ENCODE measurements at regions of chr10 and their contacts with region 1.

Region 1: DNA sequence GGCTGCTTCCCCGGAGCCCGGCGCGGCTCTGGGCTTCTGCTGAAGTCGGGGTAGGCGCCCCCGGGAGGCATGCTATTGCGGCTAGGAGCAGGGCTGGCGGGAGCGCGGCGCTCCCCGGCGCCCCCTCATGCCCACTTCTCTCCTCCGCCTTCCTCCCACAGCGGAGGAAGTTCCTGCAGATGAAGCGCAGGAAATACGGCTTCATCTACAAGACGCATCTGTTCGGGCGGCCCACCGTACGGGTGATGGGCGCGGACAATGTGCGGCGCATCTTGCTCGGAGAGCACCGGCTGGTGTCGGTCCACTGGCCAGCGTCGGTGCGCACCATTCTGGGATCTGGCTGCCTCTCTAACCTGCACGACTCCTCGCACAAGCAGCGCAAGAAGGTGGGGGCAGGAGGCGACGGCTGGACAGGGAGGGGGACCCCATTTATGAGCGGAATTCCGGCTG is 479 bp downstream of the CYP26A1 start:
- DNase-seq: no peak
- H3K4me3 Mint-ChIP-seq: peak overlapping the region; percentile 39
- H3K27ac Mint-ChIP-seq: no peak overlapping the region
- H3K4me1 Mint-ChIP-seq: peaks cover 16% of the 10 kb centered on the region
- H3K27me3 Mint-ChIP-seq: peaks cover 79% of the 10 kb centered on the region

Region 2: GRCh38 chr10:92657024-92657423 is 417.1 kb before region 1 on chr10:
- intact Hi-C with region 1: no loop called
- DNase-seq: no peak
- H3K4me3 Mint-ChIP-seq: no peak overlapping the region
- H3K27ac Mint-ChIP-seq: no peak overlapping the region
- H3K4me1 Mint-ChIP-seq: no peaks in the 10 kb centered on the region
- H3K27me3 Mint-ChIP-seq: no peaks in the 10 kb centered on the region

Region 3: GRCh38 chr10:92880233-92880861 is 193.8 kb before region 1 on chr10:
- intact Hi-C with region 1: loop called (anchors 10 kb)
- DNase-seq: no peak
- H3K4me3 Mint-ChIP-seq: no peak overlapping the region
- H3K27ac Mint-ChIP-seq: no peak overlapping the region
- H3K4me1 Mint-ChIP-seq: peaks cover 18% of the 10 kb centered on the region
- H3K27me3 Mint-ChIP-seq: peaks cover 3% of the 10 kb centered on the region

Region 4: GRCh38 chr10:92923416-92923815 is 150.8 kb before region 1 on chr10:
- intact Hi-C with region 1: no loop called
- DNase-seq: no peak
- H3K4me3 Mint-ChIP-seq: no peak overlapping the region
- H3K27ac Mint-ChIP-seq: no peak overlapping the region
- H3K4me1 Mint-ChIP-seq: peaks cover 5% of the 10 kb centered on the region
- H3K27me3 Mint-ChIP-seq: no peaks in the 10 kb centered on the region

Region 5: GRCh38 chr10:93062514-93063143 is 11.5 kb before region 1 on chr10:
- intact Hi-C with region 1: loop called (anchors 1 kb)
- DNase-seq: peak; percentile 28
- H3K4me3 Mint-ChIP-seq: peak overlapping the region; percentile 65
- H3K27ac Mint-ChIP-seq: no peak overlapping the region
- H3K4me1 Mint-ChIP-seq: peaks cover 16% of the 10 kb centered on the region
- H3K27me3 Mint-ChIP-seq: peaks cover 54% of the 10 kb centered on the region

Region 6: DNA sequence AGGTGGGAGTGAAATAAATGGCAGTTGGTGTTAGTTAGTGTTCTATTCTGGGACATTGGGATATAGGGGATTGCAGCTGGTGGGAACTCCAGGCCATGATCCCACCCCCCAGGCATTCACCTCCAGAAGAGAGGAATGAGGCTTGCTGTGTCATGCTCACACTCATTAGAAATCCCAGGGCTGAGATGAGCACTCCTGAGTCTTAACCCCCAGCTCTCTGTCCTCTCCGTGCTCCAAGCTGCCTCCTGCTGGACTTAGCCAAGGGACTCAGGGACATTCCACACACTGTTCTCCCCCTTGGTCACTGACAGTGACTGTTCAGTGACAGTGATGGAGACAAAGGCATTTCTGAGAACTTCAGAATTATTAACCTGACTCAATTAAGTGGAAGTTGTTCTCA is 21.1 kb after region 1 on chr10:
- intact Hi-C with region 1: no loop called
- DNase-seq: no peak
- H3K4me3 Mint-ChIP-seq: no peak overlapping the region
- H3K27ac Mint-ChIP-seq: no peak overlapping the region
- H3K4me1 Mint-ChIP-seq: no peaks in the 10 kb centered on the region
- H3K27me3 Mint-ChIP-seq: peaks cover 8% of the 10 kb centered on the region

Region 7: GRCh38 chr10:93503075-93503474 is 428.9 kb after region 1 on chr10:
- intact Hi-C with region 1: loop called (anchors 10 kb)
- DNase-seq: no peak
- H3K4me3 Mint-ChIP-seq: peak overlapping the region; percentile 76
- H3K27ac Mint-ChIP-seq: peak overlapping the region; percentile 91
- H3K4me1 Mint-ChIP-seq: peaks cover 67% of the 10 kb centered on the region
- H3K27me3 Mint-ChIP-seq: no peaks in the 10 kb centered on the region

Region 8: GRCh38 chr10:93821051-93821772 is 747.0 kb after region 1 on chr10:
- intact Hi-C with region 1: no loop called
- DNase-seq: no peak
- H3K4me3 Mint-ChIP-seq: no peak overlapping the region
- H3K27ac Mint-ChIP-seq: no peak overlapping the region
- H3K4me1 Mint-ChIP-seq: no peaks in the 10 kb centered on the region
- H3K27me3 Mint-ChIP-seq: peaks cover 15% of the 10 kb centered on the region